Right ventricle myocardium superior (tissue), 1 donor: ENCODE measurements at regions of chr7 and their contacts with region 1.

Region 1: DNA sequence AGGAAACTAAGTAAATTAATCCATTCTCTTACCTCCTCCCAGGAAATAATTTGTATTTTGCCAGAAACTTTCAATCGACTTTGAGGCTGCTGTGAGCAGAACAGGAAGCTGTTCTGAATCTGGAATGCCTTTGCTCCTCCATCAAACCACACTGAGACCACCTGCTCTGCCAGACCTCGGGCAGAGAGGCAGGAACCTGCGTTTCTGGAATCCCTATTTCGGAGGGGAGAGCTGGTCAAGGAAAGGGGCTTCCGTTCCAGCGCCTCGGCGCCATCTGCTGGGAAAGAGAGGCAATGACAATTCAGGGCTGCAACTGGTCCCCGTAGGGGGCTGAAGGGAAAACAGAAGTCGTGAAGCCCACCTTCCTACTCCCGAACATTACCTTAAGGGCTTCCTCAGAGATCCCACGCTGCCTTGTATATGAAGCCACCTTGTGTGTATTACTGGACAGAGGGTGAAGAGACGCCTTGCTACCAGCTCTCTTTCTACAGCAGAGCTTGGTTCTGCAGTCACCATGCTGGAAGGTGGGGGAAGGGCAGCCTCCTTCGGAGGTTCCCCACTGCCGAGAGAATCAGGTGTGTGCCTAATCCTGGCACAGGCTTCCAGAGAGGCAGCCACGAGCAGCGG is 31.2 kb downstream of the ZNF467 start:
- DNase-seq: peak; percentile 84
- ATAC-seq: peak; percentile 92

Region 2: GRCh38 chr7:149669121-149669818 is 72.9 kb before region 1 on chr7:
- intact Hi-C with region 1: loop called (anchors 2 kb)
- DNase-seq: no peak
- ATAC-seq: no peak